PC-3 (cell line): ENCODE measurements at regions of chr3 and their contacts with region 1.

Region 1: GRCh38 chr3:185764163-185764979 is 60.5 kb downstream of the IGF2BP2 start:
- DNase-seq: no peak
- ATAC-seq: no peak
- H3K4me3 ChIP-seq: no peak overlapping the region
- H3K27ac ChIP-seq: no peak overlapping the region
- H3K4me1 ChIP-seq: peaks cover 43% of the 10 kb centered on the region
- H3K27me3 ChIP-seq: no peaks in the 10 kb centered on the region
- CTCF ChIP-seq: no peak

Region 2: GRCh38 chr3:185677146-185677829 is 87.1 kb before region 1 on chr3:
- CTCF ChIA-PET with region 1: interaction called, 8 read pairs
- POLR2A ChIA-PET with region 1: interaction called, 6 read pairs
- intact Hi-C with region 1: loop called (anchors 1 kb)
- DNase-seq: peak; percentile 98
- ATAC-seq: peak; percentile 94
- H3K4me3 ChIP-seq: no peak overlapping the region
- H3K27ac ChIP-seq: peak overlapping the region; percentile 38
- H3K4me1 ChIP-seq: no peaks in the 10 kb centered on the region
- H3K27me3 ChIP-seq: no peaks in the 10 kb centered on the region
- CTCF ChIP-seq: peak; percentile 89

Region 3: GRCh38 chr3:185796431-185797107 is 32.2 kb after region 1 on chr3:
- CTCF ChIA-PET with region 1: interaction called, 10 read pairs
- POLR2A ChIA-PET with region 1: no interaction called
- intact Hi-C with region 1: no loop called
- DNase-seq: peak; percentile 100
- ATAC-seq: peak; percentile 88
- H3K4me3 ChIP-seq: peak overlapping the region; percentile 23; the same call in 1 of the 2 replicates
- H3K27ac ChIP-seq: peak overlapping the region; percentile 95
- H3K4me1 ChIP-seq: peaks cover 49% of the 10 kb centered on the region
- H3K27me3 ChIP-seq: no peaks in the 10 kb centered on the region
- CTCF ChIP-seq: no peak